Dorsolateral prefrontal cortex (tissue), 120 donors: ENCODE measurements at regions of chr18 and their contacts with region 1.

Region 1: GRCh38 chr18:61308795-61309393 is 24.3 kb upstream of the CDH20 start:
- DNase-seq: peak; percentile 32 to 82 (median 69)
- H3K4me3 ChIP-seq: peak overlapping the region in 12 of 59 donors; percentile 0 to 44 (median 13)
- H3K27ac ChIP-seq: peak overlapping the region in 23 of 59 donors; percentile 2 to 69 (median 44)
- H3K27me3 ChIP-seq: no peaks in the 10 kb centered on the region
- CTCF ChIP-seq: peak in 34 of 56 donors; percentile 7 to 56 (median 28)

Region 2: DNA sequence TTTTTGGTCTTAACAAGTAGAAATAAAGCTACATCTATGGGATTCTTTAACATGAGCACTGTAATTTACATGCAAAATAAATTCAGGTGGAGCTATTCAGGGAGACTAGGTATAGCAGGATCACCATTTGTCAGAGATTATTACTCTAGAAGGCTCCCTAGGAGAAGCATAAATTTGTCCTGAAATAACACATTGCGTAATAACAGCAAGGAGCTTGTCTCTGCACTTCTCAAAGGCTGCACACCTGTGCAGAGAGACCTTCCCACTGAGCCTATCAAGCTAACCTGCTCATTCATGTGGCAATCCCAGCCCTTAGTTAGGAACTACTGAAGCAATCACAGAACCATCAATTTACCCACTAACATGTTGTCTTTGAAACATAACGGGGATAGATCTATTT is 499.0 kb before region 1 on chr18:
- intact Hi-C with region 1: loop called in 1 of 2 experiments (anchors 10 kb)
- DNase-seq: no peak
- H3K4me3 ChIP-seq: no peak overlapping the region
- H3K27ac ChIP-seq: no peak overlapping the region
- H3K27me3 ChIP-seq: no peaks in the 10 kb centered on the region
- CTCF ChIP-seq: no peak